ENCODE measurements at regions of chr5 and their contacts with region 1.

Region 1: DNA sequence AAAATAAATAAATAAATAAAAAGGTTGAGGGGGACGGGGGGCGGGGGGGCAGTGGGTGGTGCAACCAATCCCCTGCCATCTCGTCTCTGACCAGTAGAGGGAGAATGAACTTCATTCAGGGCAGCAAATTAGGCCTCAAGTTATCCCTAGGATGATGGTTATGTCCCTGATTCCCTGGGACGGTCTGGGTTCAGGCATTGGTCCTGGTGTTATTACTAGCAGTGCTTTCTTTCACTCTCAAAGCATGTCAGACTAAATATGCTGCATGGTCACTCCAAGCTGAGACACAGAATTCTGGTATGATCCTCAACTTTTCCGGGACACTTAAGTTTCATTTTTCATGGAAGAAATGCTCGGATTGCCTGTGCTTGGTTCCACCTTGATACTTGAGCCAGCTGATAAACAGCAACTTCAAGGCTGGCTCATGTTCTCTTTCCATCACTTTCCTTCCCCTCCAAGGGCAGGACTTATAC is 59.4 kb downstream of the DAP start:
- H3K4me3 ChIP-seq: no peak overlapping the region
- H3K27ac ChIP-seq: no peak overlapping the region
- H3K4me1 ChIP-seq: no peaks in the 10 kb centered on the region
- CTCF ChIP-seq: no peak

Region 2: GRCh38 chr5:10689391-10690081 is 12.1 kb before region 1 on chr5:
- CTCF ChIA-PET with region 1: interaction called, 14 read pairs
- POLR2A ChIA-PET with region 1: no interaction called
- H3K4me3 ChIP-seq: no peak overlapping the region
- H3K27ac ChIP-seq: no peak overlapping the region
- H3K4me1 ChIP-seq: no peaks in the 10 kb centered on the region
- CTCF ChIP-seq: peak; percentile 48; the same call in 1 of the 2 replicates

Region 3: DNA sequence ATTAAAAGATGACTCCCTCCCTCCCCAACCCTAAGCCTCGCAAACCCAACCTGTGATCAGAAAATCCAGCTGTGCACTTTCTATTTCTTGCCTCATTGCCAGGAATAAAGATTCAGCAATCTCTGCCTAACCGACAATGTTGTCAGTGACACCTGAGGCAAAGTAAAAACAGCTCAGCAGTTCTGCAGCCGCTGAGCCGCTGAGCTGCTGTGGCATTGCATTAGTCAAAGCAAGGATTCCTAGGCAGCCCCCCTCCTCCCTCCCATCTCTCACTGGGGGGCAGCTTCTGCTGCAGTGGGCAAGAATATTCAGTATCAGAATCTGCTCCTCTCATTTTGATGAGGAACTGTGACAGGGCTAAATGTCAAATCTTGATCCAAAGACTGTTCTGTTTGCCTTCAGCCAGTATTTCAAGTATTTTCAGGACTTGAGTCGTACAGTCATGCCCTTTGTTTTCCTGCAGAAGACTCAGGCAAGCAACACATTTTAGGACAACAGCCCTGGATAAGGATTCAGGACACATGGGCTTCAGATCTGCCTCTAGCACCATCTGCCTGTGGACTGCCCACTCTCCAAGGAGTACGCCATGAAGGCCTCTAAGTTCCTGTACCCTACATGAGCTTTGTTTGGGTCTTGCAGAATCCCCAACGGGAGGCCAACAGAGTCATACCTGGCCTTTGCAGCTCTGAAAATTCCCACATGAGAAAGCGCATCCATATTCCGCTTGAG is 100.5 kb after region 1 on chr5:
- CTCF ChIA-PET with region 1: interaction called, 10 read pairs
- POLR2A ChIA-PET with region 1: no interaction called
- H3K4me3 ChIP-seq: no peak overlapping the region
- H3K27ac ChIP-seq: no peak overlapping the region
- H3K4me1 ChIP-seq: no peaks in the 10 kb centered on the region
- CTCF ChIP-seq: no peak